ENCODE measurements at regions of chr20 and their contacts with region 1.

Region 1: DNA sequence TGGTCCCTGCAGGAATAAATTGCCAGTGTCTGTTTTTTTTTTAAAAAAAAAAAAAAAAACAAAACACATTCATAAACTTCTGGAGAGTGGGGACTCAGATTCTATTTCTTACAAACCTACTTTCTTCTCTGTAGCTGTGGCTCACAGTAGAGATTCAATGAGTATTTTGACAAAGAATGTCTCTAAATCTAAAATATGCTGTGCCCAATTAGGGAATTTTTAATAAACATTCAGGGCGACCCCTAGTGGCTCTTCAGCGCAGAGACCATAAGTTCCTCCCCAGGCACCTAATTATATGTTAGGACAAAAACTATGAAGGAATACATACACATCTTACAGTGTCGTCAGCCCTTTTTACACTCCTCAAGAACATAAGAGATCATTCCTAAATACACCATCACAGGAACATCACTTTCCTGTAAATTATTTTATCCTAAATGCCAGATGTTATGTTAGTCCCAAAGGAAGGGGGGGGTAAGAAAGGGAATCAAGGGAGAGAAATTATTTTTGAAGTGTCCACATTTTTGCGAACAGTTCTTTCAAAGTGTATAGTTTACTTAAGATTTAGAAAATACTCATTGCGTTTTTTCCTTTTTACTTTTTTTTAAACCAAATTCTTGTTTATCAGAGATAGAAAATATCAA is 21.8 kb upstream of the NAA20 start:
- DNase-seq: peak; percentile 53
- H3K4me3 ChIP-seq: no peak overlapping the region
- H3K4me1 ChIP-seq: peaks cover 21% of the 10 kb centered on the region
- H3K27me3 ChIP-seq: no peaks in the 10 kb centered on the region

Region 2: GRCh38 chr20:19692685-19693119 is 302.6 kb before region 1 on chr20:
- in situ Hi-C with region 1: loop called (anchors 25 kb)
- DNase-seq: peak; percentile 13 to 74
- H3K4me3 ChIP-seq: no peak overlapping the region
- H3K4me1 ChIP-seq: no peaks in the 10 kb centered on the region
- H3K27me3 ChIP-seq: no peaks in the 10 kb centered on the region

Region 3: GRCh38 chr20:19784511-19785172 is 210.7 kb before region 1 on chr20:
- in situ Hi-C with region 1: loop called (anchors 10 kb)
- DNase-seq: peak; percentile 68
- H3K4me3 ChIP-seq: no peak overlapping the region
- H3K4me1 ChIP-seq: no peaks in the 10 kb centered on the region; the same call in none of the 2 replicates
- H3K27me3 ChIP-seq: no peaks in the 10 kb centered on the region